GM18951 (cell line): ENCODE measurements at regions of chr13 and their contacts with region 1.

Region 1: DNA sequence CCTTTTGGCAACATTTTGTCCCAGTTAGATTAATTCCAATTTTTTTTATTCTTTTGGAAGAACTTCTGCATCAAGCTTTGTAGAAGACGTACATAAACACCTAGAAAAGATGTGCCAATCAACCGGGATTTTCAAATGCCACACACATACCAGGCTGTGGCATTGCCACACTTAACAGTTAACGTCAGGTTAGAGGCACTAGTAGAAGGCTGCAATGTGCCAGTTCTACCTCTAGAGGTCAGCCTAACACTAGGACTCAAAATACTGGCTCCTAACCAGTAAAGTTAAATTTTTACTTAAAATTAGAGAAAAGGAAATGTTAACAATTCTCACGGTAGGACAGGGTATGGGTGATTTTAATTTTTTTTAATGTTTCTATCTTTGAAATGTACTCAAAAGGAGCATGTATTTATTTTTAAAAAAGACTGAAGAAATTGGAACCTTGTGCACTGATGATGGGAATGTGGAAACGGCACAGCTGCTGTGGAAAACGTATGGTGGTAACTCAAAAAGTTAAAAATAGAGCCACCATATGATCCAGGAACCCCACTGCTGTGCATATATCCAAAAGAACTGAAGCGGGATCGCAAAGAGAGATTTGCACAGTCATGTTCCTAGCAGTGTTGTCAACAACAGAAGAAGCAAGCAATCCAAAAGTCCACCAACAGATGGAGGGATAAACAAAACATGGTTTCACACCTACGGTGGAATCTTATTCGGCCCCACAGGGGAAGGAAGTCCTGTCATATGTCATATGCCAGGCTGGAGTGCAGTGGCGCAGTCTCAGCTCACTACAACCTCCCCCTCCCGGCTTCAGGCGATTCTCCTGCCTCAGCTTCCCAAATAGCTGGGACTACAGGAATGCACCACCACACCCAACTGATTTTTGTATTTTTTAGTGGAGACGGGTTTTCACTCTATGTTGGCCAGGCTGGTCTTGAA is 30.3 kb downstream of the CRYL1 start:
- POLR2A ChIP-seq: no peak

Region 2: DNA sequence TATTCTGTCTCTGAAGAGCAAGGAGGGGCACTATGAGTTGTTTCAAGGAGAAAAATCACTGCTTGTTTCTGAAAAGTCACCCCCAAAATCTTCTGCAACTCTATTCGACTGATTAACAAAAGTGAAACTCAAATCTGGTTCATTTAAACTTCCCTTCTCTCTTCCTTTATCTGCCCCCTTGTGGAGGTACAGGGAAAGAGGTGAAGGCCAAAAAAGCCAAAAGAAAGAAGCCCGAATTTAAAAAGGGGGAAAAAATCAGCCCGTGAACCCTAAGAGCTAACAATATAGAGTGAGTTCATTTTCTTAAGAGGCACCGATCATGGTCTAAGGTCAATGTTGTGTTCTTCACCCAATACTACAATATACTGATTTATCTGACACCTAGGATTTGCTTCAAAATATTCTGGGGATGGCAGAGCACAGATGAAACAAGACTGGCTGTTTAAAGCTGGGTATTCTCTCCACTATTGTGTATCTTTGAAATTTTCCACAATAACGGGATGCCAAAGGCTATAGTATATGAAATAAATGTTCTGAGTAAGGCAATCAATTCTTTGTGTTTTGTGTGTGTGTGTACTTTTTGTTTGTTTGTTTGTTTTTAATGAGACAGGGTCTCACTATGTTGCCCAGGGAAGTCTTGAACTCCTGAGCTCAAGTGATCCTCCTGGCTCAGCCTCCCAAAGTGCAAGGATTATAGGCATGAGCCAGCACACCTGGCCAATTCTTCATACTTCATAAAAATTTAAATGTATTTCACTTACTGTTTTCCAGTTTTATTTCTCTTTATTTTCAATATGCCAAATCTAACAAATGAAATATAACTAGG is 333.4 kb after region 1 on chr13:
- in situ Hi-C with region 1: loop called (anchors 10 kb)
- POLR2A ChIP-seq: no peak